ENCODE measurements at regions of chr17 and their contacts with region 1.

Region 1: GRCh38 chr17:64291254-64291851 is 28.3 kb upstream of the TEX2 start:
- DNase-seq: no peak
- CTCF ChIP-seq: no peak

Region 2: DNA sequence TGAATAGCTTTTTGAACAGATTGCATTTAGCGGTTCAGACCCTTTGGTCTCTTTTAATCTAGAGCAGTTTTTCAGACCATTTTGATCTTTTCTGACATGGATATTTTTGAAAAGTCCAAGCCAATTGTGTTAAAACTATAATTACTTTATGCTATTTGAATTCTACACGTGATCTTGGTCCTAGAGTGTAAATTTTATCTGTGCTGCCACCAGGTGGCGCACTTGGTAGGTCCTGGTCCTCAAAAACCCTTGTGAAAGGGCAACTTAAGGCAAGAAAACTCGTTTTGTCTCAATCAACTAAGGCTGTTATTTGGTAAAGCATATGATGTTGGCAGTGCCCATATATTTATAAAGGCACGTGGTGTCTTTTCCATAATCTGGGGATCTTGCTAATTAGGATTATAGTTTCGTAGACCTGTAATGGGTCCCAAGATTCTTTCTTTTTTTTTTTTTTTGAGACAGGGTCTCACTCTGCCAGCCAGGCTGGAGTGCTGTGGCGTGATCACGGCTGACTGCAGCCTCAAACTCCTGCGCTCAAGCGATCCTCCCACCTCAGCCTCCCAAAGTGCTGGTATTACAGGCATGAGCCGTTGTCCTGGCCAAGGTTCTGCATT is 15.6 kb after region 1 on chr17:
- CTCF ChIA-PET with region 1: interaction called, 13 read pairs
- POLR2A ChIA-PET with region 1: no interaction called
- DNase-seq: peak; percentile 73
- CTCF ChIP-seq: peak; percentile 88